Dendritic cell treated with granulocyte-macrophage colony-stimulating factor and Interleukin-4, amounts not matched to agents 40 ng/mL and 50 ng/mL, for 4 days (primary cell): ENCODE measurements at regions of chr6 and their contacts with region 1.

Region 1: DNA sequence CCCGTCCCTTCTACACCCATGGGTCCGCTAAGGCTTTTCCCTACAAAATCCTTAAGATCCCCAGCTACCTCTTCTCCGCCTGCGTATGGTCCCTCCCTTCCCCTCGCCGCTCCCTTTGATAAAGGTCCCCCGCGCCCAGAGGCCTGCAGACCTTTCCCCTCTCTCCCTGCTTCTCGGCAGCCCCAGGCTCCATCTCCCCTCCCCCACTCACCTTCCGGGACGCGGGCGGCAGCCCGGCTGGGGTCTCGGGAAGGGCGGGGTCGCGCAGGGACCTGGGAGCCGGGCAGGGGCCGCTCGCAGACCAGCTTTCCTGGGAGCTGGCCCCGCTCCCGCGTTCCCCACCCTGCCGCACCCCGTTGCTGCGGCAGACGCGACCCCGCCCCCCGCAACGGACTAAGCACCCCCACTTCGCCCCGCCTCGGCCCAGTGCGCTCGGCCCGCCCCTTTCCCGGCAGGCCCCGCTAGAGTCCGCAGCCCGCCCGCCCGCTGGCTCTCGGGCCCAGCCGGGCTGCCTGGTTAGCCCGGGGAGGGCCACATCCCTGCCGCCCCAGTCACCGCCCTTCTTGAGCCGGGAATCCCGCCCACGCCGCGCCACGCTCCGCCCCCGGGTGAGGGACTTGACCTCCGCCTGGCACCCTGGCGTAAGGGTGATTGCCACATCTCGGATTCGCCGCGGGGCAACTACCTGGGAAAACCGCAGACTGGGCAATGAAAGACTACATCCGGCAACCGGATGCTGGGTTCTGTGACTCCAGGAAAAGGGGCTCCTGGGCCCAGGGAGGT is at the start of gene FLOT1:
- H3K4me3 Mint-ChIP-seq: peak within 1 kb of the TSS; percentile 98
- H3K27ac Mint-ChIP-seq: peak within 1 kb of the TSS; percentile 99
- H3K4me1 Mint-ChIP-seq: peaks cover 67% of the 10 kb centered on the region
- H3K27me3 Mint-ChIP-seq: peaks cover 4% of the 10 kb centered on the region

Region 2: DNA sequence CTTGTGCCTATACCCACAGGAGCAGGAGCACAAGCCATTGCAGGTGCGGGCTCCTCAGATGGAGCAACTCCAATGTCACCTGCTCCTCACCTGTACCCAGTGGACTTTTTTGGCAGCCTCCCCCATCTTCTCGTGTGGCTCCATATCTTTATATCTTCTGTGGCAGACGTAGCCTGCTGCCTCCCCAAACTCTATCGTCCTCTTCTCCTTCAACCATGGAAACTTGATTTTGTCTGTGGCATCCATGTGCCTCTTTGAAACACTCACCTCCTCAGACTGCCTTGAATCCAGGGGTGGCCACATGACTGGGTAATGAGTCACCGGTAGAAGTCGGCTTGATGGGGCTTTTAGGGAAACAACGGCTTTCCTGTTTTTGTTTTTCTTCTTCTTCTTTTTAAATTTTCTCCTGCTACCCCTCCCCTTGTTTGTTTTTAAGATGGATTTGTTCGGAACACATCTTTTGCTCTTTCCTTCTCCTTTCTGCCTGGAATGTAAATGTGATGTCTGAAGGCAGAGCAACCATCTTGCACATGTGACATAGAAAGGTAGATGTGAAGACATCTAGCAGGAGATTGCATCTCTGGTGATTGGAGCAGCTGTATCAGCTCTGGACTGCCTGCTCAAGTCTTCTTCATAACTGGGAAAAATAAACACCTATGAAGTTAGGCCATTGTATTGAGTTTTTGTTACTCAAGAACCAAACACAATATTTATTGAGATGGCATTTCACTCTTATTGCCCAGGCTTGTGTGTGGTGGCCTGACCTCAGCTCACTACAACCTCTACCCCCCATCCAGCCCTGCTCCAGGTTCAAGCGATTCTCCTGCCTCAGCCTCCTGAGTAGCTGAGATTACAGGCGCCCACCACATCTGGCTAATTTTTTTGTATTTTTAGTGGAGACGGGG is 71.9 kb after region 1 on chr6:
- intact Hi-C with region 1: loop called (anchors 5 kb)
- H3K4me3 Mint-ChIP-seq: peak overlapping the region; percentile 20
- H3K27ac Mint-ChIP-seq: peak overlapping the region; percentile 87
- H3K4me1 Mint-ChIP-seq: peaks cover 83% of the 10 kb centered on the region
- H3K27me3 Mint-ChIP-seq: no peaks in the 10 kb centered on the region

Region 3: DNA sequence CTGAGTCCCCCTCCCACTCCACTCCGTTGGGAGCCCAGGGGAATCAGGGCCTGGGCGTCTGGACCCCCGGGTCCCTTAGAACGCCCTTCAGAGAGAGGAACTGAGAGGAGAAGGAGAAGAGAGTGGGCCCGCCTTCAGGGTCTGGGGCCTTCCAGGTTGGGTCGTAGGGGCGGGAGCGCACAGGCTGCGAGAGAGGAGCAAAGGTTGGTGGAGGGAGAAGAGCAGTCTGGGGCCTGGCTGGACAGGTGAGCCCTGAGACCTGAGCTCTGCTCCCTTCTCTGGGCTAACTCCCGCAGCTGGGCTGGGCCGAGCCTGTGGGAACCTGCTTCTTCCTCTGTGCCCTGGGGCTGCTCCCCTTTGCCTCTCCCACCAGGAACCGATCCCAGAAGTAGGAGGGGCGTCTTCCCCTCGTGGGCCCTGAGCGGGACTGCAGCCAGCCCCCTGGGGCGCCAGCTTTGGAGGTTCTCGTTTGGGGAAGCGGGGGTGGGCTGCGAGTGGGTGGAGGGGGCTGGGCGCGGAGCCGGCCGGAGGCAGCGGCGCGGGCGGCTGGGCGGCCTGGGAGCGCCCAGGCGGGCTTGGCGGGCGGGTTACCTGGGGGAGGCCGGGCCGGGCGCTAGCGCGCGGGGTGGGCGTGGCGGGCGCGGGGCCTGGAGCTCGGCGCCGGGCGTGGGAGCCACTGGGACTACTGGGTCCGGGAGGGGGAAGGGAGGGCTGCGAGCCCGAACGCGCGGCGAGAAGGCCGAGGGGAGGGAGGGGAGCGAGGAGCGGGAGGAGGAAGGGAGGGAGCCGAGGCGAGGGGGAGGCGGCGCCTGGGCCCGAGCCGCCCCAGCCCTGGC is 141.4 kb after region 1 on chr6 and contains the start of gene DDR1:
- intact Hi-C with region 1: no loop called
- H3K4me3 Mint-ChIP-seq: peak within 1 kb of the TSS; percentile 64
- H3K27ac Mint-ChIP-seq: peak within 1 kb of the TSS; percentile 28
- H3K4me1 Mint-ChIP-seq: peaks cover 26% of the 10 kb centered on the region
- H3K27me3 Mint-ChIP-seq: peaks cover 60% of the 10 kb centered on the region